ENCODE measurements at regions of chr6 and their contacts with region 1.

Region 1: DNA sequence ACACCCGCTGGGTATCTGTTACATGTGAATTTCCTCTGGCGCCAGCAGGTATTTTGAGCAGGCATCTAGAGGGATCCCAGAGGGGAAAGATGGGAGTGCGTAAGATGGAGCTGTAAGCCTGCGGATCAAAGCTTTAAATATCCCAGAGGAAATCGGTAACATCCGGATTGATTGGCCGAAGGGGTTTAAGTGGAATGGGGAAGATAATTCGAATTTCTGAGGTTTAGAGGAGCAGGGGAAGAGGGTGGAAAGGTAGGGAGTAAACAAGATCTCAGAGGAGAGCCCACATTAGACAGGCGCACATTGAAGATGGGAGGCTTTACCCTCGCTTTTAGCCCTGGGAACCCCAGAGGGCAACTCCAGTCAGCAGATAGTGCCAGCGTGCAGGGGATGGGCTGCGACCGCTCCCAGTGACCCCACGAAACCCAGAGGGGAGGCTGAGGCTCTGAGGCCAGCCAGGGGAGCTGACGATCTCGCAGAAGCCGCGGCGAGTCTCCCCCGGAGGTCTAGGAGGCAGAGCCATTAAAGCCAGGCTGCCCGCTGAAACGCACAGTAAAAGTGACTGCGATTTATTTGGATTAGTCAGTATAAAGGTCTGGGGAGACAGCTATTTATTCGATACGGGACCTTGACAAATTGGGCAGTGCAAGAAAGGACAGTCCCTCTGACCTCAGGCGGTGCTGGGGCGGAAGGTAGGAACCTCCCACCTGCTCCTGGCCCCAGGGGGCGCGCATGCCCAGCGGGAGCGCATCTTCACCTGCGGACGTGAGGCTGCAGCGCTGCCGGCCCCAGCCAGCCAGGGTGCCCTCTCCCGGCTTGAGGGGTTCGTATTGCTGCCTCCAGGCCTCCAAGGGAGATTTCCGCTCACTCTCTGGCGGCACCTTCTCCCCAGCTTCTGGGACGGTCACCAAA is 34.3 kb upstream of the TCF21 start:
- DNase-seq: no peak
- H3K4me3 Mint-ChIP-seq: no peak overlapping the region
- H3K27ac Mint-ChIP-seq: no peak overlapping the region
- H3K4me1 Mint-ChIP-seq: peaks cover 5% of the 10 kb centered on the region
- H3K27me3 Mint-ChIP-seq: peaks cover 60% of the 10 kb centered on the region

Region 2: GRCh38 chr6:133241086-133241900 is 613.3 kb before region 1 on chr6 and contains the start of gene EYA4:
- intact Hi-C with region 1: loop called (anchors 10 kb)
- DNase-seq: no peak
- H3K4me3 Mint-ChIP-seq: no peak within 1 kb of the TSS
- H3K27ac Mint-ChIP-seq: no peak within 1 kb of the TSS
- H3K4me1 Mint-ChIP-seq: peaks cover 5% of the 10 kb centered on the region
- H3K27me3 Mint-ChIP-seq: peaks cover 64% of the 10 kb centered on the region
- total RNA-seq, gene EYA4: not detected in 2 replicates

Region 3: DNA sequence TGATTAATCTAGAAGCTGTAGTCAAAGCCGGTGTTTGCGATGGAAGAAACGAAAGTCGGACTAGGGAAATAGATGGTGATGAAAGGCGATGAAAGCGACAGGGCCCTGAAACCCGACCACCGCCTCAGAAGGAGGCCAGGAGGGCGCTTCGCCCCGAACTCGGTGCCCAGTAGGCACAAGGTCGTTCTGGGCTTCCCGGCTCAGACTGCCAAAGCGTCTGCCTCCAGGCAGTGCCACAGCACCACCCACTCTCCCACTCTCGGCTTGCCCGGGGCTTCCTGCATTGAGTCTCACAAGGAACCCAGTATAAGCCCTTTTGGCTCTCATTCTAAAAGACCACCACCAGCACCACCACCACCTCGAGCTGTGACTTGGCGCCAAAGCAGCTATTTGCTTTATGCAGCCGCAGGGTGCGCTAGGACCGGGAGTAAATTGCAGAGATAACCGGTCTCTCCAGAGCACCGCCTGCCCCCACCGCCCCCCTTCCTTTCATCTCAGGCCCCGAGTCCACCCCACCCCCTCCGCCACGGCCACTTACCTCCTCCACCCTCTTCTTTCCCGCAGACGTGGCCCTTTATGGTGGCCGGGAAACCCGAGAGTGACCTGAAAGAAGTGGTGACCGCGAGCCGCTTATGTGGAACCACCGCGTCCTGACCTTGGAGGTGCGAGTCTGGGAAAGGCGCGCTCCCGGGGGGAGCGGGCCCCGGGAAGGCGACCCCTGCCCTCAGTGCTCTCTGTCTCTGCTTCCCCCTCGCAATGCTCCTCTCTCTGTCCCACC is 36.7 kb after region 1 on chr6:
- intact Hi-C with region 1: loop called (anchors 1 kb)
- DNase-seq: no peak
- H3K4me3 Mint-ChIP-seq: peak overlapping the region; percentile 64
- H3K27ac Mint-ChIP-seq: no peak overlapping the region
- H3K4me1 Mint-ChIP-seq: peaks cover 19% of the 10 kb centered on the region
- H3K27me3 Mint-ChIP-seq: peaks cover 87% of the 10 kb centered on the region

Measured in activated T-helper 2 cell treated with anti-CD3 and anti-CD28 coated beads, Interferon-gamma antibody, Interleukin-2, Interleukin-4, amounts not matched to agents 10 μg/mL and 5 μg/mL and 100 μg/mL, durations not matched to agents 14 hours and 24 hours and 36 hours (primary cell).